Right ventricle myocardium inferior (tissue), 1 donor: ENCODE measurements at regions of chr16 and their contacts with region 1.

Region 1: DNA sequence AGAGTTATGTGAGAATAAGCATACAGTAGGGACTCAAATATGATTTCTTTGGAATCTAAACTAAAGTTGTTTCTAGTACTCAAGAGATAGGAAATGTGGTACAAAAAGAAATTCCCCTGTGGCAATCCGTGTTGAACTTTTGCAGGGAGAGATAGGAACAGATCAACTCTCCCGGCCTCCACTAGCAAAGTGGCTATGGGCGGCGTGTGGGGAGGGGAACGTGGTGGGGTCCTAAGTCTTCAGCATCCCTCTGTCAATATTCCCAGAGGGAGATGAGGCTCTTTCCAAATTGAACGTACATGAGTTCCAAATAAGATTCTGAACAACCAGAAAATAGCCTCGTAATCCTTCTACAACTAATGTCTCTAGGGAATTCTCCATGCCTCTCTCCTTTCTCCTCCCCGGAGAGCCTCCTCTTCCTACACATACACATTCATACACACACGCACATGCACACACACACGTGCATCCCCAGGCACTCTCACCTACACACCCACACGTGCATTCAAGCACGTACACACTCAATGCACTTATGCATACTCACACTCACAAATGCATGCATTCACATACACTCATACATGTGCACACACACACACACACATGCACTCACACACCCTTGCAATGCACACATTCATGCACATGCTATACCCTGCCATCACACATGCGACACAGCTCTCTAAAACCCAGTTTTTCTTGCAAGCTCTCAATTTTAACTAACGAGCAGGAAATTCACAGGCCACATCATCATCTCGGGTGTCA is 244.8 kb downstream of the MAF start:
- DNase-seq: no peak
- ATAC-seq: peak; percentile 42

Region 2: GRCh38 chr16:79132701-79133100 is 223.1 kb before region 1 on chr16:
- intact Hi-C with region 1: no loop called
- DNase-seq: no peak
- ATAC-seq: peak; percentile 93

Region 3: GRCh38 chr16:79261481-79261940 is 94.3 kb before region 1 on chr16:
- intact Hi-C with region 1: loop called (anchors 5 kb)
- DNase-seq: peak; percentile 69
- ATAC-seq: peak; percentile 47

Region 4: DNA sequence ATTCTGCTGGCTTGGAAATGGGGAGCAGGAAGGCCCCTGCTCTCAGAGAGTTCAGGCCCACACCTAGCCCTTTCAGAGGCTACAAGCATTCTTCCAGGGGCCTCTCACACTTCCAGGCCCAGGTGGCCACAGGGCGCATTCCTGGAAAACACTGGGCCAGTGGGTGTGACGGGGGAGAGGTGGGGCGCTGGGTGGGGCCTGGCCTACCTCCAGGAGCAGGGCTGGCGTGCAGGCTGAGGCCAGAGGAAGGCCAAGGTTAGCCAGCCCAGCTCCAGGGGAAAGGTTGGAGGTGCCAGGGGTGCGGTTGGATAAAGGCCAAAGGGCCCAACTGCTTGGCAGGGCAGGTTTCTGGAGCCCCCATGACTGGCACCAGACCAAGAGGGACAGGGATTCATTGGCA is 46.6 kb after region 1 on chr16:
- intact Hi-C with region 1: no loop called
- DNase-seq: no peak
- ATAC-seq: no peak

Region 5: DNA sequence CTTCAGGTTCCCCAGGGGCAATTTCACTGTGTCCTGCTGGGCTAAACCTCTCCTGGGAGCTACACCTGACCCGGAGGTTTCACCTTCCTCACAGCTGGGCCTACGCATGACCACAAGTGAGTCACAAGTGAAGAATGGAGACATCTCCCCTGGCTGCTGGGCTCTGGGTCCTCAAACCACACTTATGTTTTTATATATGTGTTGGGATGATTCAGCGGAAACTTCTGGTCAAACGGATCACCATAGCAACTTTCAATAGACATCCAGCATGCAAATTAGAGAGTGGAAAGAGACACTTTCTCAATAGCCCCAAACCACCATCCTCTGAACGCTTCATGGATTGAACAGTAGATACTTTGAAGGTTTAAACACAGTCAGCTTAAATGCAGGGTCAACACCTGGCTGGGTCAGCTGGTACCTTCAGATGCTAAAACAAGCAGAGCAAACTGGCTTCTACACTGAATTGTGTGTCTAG is 272.8 kb after region 1 on chr16:
- intact Hi-C with region 1: no loop called
- DNase-seq: no peak
- ATAC-seq: no peak